H1 (cell line): ENCODE measurements at regions of chr1 and their contacts with region 1.

Region 1: DNA sequence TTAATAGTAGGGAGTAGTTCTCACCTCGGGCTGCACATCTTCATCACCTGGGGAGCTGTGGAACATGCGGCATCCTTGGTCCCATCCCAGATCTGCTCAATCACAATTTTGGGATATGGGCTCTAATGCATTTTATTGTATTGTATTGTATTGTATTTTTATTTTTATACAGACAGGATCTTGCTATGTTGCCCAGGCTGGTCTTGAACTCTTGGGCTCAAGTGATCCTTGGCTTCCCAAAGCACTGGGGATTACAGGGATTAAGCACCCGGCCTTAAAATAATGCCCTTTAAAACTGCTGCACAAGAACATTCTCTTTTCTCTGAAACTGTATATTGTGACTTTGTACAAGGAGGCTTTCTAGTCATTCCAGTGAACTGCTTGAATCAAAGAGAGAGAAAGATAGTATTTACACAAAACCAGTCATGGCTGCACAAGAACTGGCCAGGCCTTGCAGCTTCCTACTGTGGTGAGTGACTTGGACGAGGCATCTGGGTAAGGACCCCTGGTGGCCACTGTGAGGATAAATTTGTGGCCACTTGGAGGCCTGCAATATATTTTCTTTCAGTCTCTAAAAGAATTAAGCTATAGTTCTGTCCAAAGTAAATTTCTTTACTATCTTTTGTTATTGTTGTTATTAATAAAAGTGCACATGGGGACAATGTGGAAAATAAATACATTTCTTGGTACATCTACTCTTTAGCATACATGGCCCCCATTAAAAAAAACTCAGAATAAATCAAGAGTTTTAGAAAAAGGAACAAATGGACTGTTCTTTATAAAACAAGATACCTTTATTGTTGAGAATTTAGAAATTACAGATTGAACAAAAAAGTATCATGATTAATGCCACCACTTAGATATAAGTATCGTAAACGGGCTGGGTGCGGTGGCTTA is 48.0 kb downstream of the TBCE start:
- DNase-seq: peak; percentile 17 to 62
- H3K4me3 ChIP-seq: no peak overlapping the region
- H3K27ac ChIP-seq: no peak overlapping the region
- H3K4me1 ChIP-seq: no peaks in the 10 kb centered on the region
- H3K27me3 ChIP-seq: no peaks in the 10 kb centered on the region
- CTCF ChIP-seq: peak; percentile 71 to 84 (median 75)
- EP300 ChIP-seq: no peak
- POLR2A ChIP-seq: no peak
- RAD21 ChIP-seq: peak; percentile 66 to 71

Region 2: GRCh38 chr1:234907940-234908405 is 507.3 kb before region 1 on chr1:
- CTCF ChIA-PET with region 1: no interaction called
- POLR2A ChIA-PET with region 1: no interaction called
- DNase-seq: no peak
- H3K4me3 ChIP-seq: no peak overlapping the region
- H3K27ac ChIP-seq: no peak overlapping the region
- H3K4me1 ChIP-seq: peaks cover 0 to 6% (median 2%) of the 10 kb centered on the region in 4 experiments; a peak in 4 of 7 replicates
- H3K27me3 ChIP-seq: peaks cover 0 to 2% (median 0%) of the 10 kb centered on the region in 4 experiments; a peak in 1 of 7 replicates
- CTCF ChIP-seq: no peak
- EP300 ChIP-seq: no peak
- POLR2A ChIP-seq: no peak
- RAD21 ChIP-seq: no peak

Region 3: GRCh38 chr1:235199441-235199840 is 215.8 kb before region 1 on chr1:
- CTCF ChIA-PET with region 1: interaction called, 18 read pairs
- POLR2A ChIA-PET with region 1: no interaction called
- DNase-seq: peak in 1 of 2 experiments; percentile 57
- H3K4me3 ChIP-seq: peak overlapping the region in 1 of 4 experiments; percentile 29; a peak in 1 of 8 replicates
- H3K27ac ChIP-seq: no peak overlapping the region
- H3K4me1 ChIP-seq: no peaks in the 10 kb centered on the region
- H3K27me3 ChIP-seq: no peaks in the 10 kb centered on the region
- CTCF ChIP-seq: peak in 2 of 3 experiments; percentile 47 to 51; a peak in 3 of 4 replicates
- EP300 ChIP-seq: no peak; a peak in 1 of 3 replicates
- POLR2A ChIP-seq: no peak
- RAD21 ChIP-seq: peak; percentile 59 to 62

Region 4: GRCh38 chr1:235253219-235253962 is 161.9 kb before region 1 on chr1:
- CTCF ChIA-PET with region 1: interaction called, 39 read pairs
- POLR2A ChIA-PET with region 1: no interaction called
- DNase-seq: peak in 1 of 2 experiments; percentile 25
- H3K4me3 ChIP-seq: no peak overlapping the region
- H3K27ac ChIP-seq: no peak overlapping the region
- H3K4me1 ChIP-seq: no peaks in the 10 kb centered on the region
- H3K27me3 ChIP-seq: no peaks in the 10 kb centered on the region
- CTCF ChIP-seq: peak; percentile 79 to 87 (median 85)
- EP300 ChIP-seq: no peak
- POLR2A ChIP-seq: no peak
- RAD21 ChIP-seq: peak; percentile 88 to 94

Region 5: GRCh38 chr1:235272851-235273250 is 142.4 kb before region 1 on chr1:
- CTCF ChIA-PET with region 1: interaction called, 13 read pairs
- POLR2A ChIA-PET with region 1: no interaction called
- DNase-seq: no peak
- H3K4me3 ChIP-seq: no peak overlapping the region
- H3K27ac ChIP-seq: no peak overlapping the region
- H3K4me1 ChIP-seq: peaks cover 0 to 2% (median 0%) of the 10 kb centered on the region in 4 experiments; a peak in 2 of 7 replicates
- H3K27me3 ChIP-seq: no peaks in the 10 kb centered on the region
- CTCF ChIP-seq: no peak
- EP300 ChIP-seq: no peak
- POLR2A ChIP-seq: no peak
- RAD21 ChIP-seq: no peak

Region 6: GRCh38 chr1:235339746-235340445 is 75.4 kb before region 1 on chr1:
- CTCF ChIA-PET with region 1: interaction called, 10 read pairs
- POLR2A ChIA-PET with region 1: no interaction called
- DNase-seq: no peak
- H3K4me3 ChIP-seq: no peak overlapping the region
- H3K27ac ChIP-seq: no peak overlapping the region
- H3K4me1 ChIP-seq: no peaks in the 10 kb centered on the region
- H3K27me3 ChIP-seq: no peaks in the 10 kb centered on the region
- CTCF ChIP-seq: no peak
- EP300 ChIP-seq: no peak
- POLR2A ChIP-seq: no peak
- RAD21 ChIP-seq: no peak